Activated naive CD4-positive, alpha-beta T cell treated with anti-CD3 and anti-CD28 coated beads for 36 hours (primary cell): ENCODE measurements at regions of chr9 and their contacts with region 1.

Region 1: GRCh38 chr9:127980706-127981558 is at the start of gene EEIG1:
- DNase-seq: peak; percentile 98
- H3K4me3 Mint-ChIP-seq: peak within 1 kb of the TSS; percentile 98
- H3K27ac Mint-ChIP-seq: peak within 1 kb of the TSS; percentile 98
- H3K4me1 Mint-ChIP-seq: peaks cover 44% of the 10 kb centered on the region
- H3K27me3 Mint-ChIP-seq: no peaks in the 10 kb centered on the region
- total RNA-seq, gene EEIG1: 61.0 to 70.8 TPM

Region 2: GRCh38 chr9:127786773-127787104 is 194.2 kb before region 1 on chr9:
- CTCF ChIA-PET with region 1: no interaction called
- intact Hi-C with region 1: no loop called
- DNase-seq: no peak
- H3K4me3 Mint-ChIP-seq: peak overlapping the region; percentile 95
- H3K27ac Mint-ChIP-seq: peak overlapping the region; percentile 81
- H3K4me1 Mint-ChIP-seq: peaks cover 61% of the 10 kb centered on the region
- H3K27me3 Mint-ChIP-seq: no peaks in the 10 kb centered on the region

Region 3: GRCh38 chr9:127847155-127847463 is 133.8 kb before region 1 on chr9:
- CTCF ChIA-PET with region 1: no interaction called
- intact Hi-C with region 1: no loop called
- DNase-seq: no peak
- H3K4me3 Mint-ChIP-seq: no peak overlapping the region
- H3K27ac Mint-ChIP-seq: no peak overlapping the region
- H3K4me1 Mint-ChIP-seq: peaks cover 3% of the 10 kb centered on the region
- H3K27me3 Mint-ChIP-seq: no peaks in the 10 kb centered on the region

Region 4: GRCh38 chr9:127937388-127938280 is 43.3 kb before region 1 on chr9 and contains the start of gene DPM2:
- CTCF ChIA-PET with region 1: interaction called, 75 read pairs
- intact Hi-C with region 1: loop called (anchors 5 kb)
- DNase-seq: peak; percentile 87
- H3K4me3 Mint-ChIP-seq: peak within 1 kb of the TSS; percentile 100
- H3K27ac Mint-ChIP-seq: peak within 1 kb of the TSS; percentile 96
- H3K4me1 Mint-ChIP-seq: peaks cover 43% of the 10 kb centered on the region
- H3K27me3 Mint-ChIP-seq: no peaks in the 10 kb centered on the region
- total RNA-seq, gene DPM2: 41.6 to 43.4 TPM

Region 5: GRCh38 chr9:127955294-127956035 is 25.5 kb before region 1 on chr9:
- CTCF ChIA-PET with region 1: interaction called, 99 read pairs
- intact Hi-C with region 1: loop called (anchors 1 kb)
- DNase-seq: peak; percentile 96
- H3K4me3 Mint-ChIP-seq: peak overlapping the region; percentile 10
- H3K27ac Mint-ChIP-seq: peak overlapping the region; percentile 95
- H3K4me1 Mint-ChIP-seq: peaks cover 96% of the 10 kb centered on the region
- H3K27me3 Mint-ChIP-seq: no peaks in the 10 kb centered on the region

Region 6: GRCh38 chr9:128007566-128008138 is 26.7 kb after region 1 on chr9:
- CTCF ChIA-PET with region 1: interaction called, 4 read pairs
- intact Hi-C with region 1: loop called (anchors 1 kb)
- DNase-seq: peak; percentile 97
- H3K4me3 Mint-ChIP-seq: peak overlapping the region; percentile 85
- H3K27ac Mint-ChIP-seq: peak overlapping the region; percentile 94
- H3K4me1 Mint-ChIP-seq: peaks cover 52% of the 10 kb centered on the region
- H3K27me3 Mint-ChIP-seq: no peaks in the 10 kb centered on the region

Region 7: GRCh38 chr9:128067876-128068613 is 87.1 kb after region 1 on chr9 and contains the start of gene SLC25A25:
- CTCF ChIA-PET with region 1: interaction called, 4 read pairs
- intact Hi-C with region 1: loop called (anchors 1 kb)
- DNase-seq: peak; percentile 100
- H3K4me3 Mint-ChIP-seq: no peak within 1 kb of the TSS
- H3K27ac Mint-ChIP-seq: peak within 1 kb of the TSS; percentile 86
- H3K4me1 Mint-ChIP-seq: peaks cover 56% of the 10 kb centered on the region
- H3K27me3 Mint-ChIP-seq: no peaks in the 10 kb centered on the region
- total RNA-seq, gene SLC25A25: 12.0 to 12.7 TPM

Region 8: GRCh38 chr9:128124873-128125569 is 144.1 kb after region 1 on chr9:
- CTCF ChIA-PET with region 1: no interaction called
- intact Hi-C with region 1: no loop called
- DNase-seq: peak; percentile 85
- H3K4me3 Mint-ChIP-seq: peak overlapping the region; percentile 6
- H3K27ac Mint-ChIP-seq: no peak overlapping the region
- H3K4me1 Mint-ChIP-seq: peaks cover 30% of the 10 kb centered on the region
- H3K27me3 Mint-ChIP-seq: no peaks in the 10 kb centered on the region